Activated CD4-positive, alpha-beta T cell treated with anti-CD3 and anti-CD28 coated beads for 36 hours (primary cell): ENCODE measurements at regions of chr18 and their contacts with region 1.

Region 1: GRCh38 chr18:48934723-48935432 is 15.9 kb downstream of the SMAD7 start:
- DNase-seq: peak; percentile 10
- ATAC-seq: no peak
- H3K4me3 Mint-ChIP-seq: peak overlapping the region; percentile 60
- H3K27ac Mint-ChIP-seq: peak overlapping the region; percentile 99
- H3K4me1 Mint-ChIP-seq: peaks cover 90% of the 10 kb centered on the region
- H3K27me3 Mint-ChIP-seq: no peaks in the 10 kb centered on the region

Region 2: DNA sequence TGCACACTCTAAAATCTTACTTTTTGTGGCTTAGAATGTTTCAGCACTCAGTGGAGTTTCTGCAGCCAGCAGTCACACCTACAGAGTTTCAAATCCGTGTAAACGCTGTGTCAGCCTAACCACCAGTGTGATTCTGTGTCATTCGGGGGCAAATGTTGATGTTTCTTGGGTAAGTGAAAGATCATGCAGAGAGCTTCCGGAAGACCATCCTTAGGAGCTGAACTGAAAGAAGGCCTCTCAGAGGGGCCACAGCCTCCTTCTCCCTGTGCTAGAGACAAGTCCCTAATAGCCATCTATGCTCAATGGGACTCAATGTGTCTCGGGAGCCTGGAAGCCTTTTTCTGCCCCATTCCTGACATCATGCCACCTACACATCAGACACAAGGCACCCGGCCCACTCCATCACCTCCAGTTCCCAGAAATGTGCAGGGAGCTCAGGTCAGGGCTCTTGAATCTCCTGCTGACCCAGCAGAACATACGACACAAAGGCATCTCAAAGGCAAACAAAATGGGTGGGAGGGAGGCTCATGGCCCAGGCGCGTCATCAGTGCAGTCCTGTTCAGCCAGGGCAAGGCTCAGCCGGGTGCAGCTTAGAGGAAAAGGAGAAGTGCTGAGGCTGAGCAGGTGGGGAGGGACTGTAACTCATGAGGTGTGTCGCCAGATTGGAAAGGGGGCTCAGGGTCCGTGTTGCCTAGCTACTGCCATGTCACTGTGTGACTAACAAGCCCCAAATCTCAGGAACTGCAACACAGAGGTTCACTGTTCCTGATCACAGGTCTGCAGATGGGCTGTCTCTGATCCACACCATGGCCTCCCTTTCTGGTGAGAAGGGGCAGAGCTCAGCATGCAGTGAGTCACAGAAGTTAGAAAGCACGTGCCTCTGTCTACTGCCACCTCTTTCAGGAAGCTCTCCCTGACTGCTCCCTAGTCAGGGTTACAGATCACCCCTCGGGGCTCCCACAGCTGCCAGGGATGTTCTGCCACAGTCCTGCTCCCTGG is 66.1 kb before region 1 on chr18:
- CTCF ChIA-PET with region 1: no interaction called
- POLR2A ChIA-PET with region 1: interaction called, 3 read pairs
- intact Hi-C with region 1: loop called in 1 of 2 experiments (anchors 1 kb)
- DNase-seq: peak; percentile 73
- ATAC-seq: peak; percentile 79
- H3K4me3 Mint-ChIP-seq: peak overlapping the region; percentile 35
- H3K27ac Mint-ChIP-seq: peak overlapping the region; percentile 85
- H3K4me1 Mint-ChIP-seq: peaks cover 34% of the 10 kb centered on the region
- H3K27me3 Mint-ChIP-seq: no peaks in the 10 kb centered on the region

Region 3: GRCh38 chr18:49081511-49082155 is 146.8 kb after region 1 on chr18:
- CTCF ChIA-PET with region 1: no interaction called
- POLR2A ChIA-PET with region 1: no interaction called
- intact Hi-C with region 1: no loop called
- DNase-seq: no peak
- ATAC-seq: peak; percentile 57
- H3K4me3 Mint-ChIP-seq: no peak overlapping the region
- H3K27ac Mint-ChIP-seq: no peak overlapping the region
- H3K4me1 Mint-ChIP-seq: peaks cover 10% of the 10 kb centered on the region
- H3K27me3 Mint-ChIP-seq: no peaks in the 10 kb centered on the region

Region 4: DNA sequence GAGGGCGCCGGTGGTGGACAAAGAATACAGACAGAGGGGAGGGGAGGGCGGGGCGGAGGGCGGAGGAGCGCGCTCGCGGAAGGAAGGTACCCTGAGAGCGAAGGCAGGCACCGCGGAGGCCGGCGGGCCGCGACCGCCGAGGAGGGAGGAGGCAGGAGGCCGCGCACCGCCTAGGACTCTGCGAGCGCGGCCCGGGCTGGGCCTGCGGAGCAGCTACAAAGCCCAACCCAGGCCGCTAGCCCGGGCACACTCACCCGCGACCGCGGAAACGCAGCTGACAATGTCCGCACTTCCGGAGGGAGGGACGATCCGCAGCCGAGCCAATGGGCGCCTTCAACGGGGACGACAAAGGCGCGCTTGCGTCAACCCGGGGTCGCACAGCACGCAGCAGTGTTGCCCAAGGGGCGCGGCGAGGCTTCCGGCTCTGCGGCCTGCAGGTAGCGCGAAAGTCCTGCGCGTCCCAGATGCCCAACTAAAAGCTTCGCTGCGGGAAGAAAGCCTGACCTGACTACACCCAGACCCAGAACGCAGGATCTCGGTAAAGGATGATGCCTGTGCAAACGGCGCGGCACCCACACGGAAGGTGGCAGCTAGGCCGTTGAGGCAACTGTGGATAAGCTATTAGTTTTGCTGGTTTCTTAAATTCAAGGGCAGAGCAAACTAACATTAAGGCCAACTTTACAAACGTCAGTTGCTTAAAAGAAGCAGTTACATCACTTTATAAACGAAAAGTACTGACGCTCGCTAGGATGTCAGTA is 552.3 kb after region 1 on chr18 and contains the start of gene C18orf32:
- CTCF ChIA-PET with region 1: no interaction called
- POLR2A ChIA-PET with region 1: no interaction called
- intact Hi-C with region 1: loop called in 1 of 2 experiments (anchors 5 kb)
- DNase-seq: peak; percentile 96
- ATAC-seq: peak; percentile 92
- H3K4me3 Mint-ChIP-seq: peak within 1 kb of the TSS; percentile 95
- H3K27ac Mint-ChIP-seq: peak within 1 kb of the TSS; percentile 100
- H3K4me1 Mint-ChIP-seq: peaks cover 60% of the 10 kb centered on the region
- H3K27me3 Mint-ChIP-seq: no peaks in the 10 kb centered on the region
- total RNA-seq, gene C18orf32: 12.7 to 20.0 TPM